Vagina (tissue), 2 donors: ENCODE measurements at regions of chr10 and their contacts with region 1.

Region 1: GRCh38 chr10:100713049-100713858 is 32.1 kb upstream of the PAX2 start:
- DNase-seq: no peak
- H3K4me3 ChIP-seq: no peak overlapping the region
- H3K27ac ChIP-seq: no peak overlapping the region
- H3K4me1 ChIP-seq: peaks cover 14% of the 10 kb centered on the region
- H3K27me3 ChIP-seq: no peaks in the 10 kb centered on the region
- CTCF ChIP-seq: no peak
- POLR2A ChIP-seq: no peak

Region 2: GRCh38 chr10:100749309-100750217 is 36.3 kb after region 1 on chr10:
- intact Hi-C with region 1: loop called (anchors 2 kb)
- DNase-seq: no peak
- H3K4me3 ChIP-seq: no peak overlapping the region
- H3K27ac ChIP-seq: no peak overlapping the region
- H3K4me1 ChIP-seq: peaks cover 31% of the 10 kb centered on the region
- H3K27me3 ChIP-seq: peaks cover 22% of the 10 kb centered on the region
- CTCF ChIP-seq: no peak
- POLR2A ChIP-seq: no peak